ENCODE measurements at regions of chr7 and their contacts with region 1.

Region 1: GRCh38 chr7:104137971-104138370 is 69.8 kb downstream of the ORC5 start:
- DNase-seq: no peak
- H3K4me3 Mint-ChIP-seq: no peak overlapping the region
- H3K27ac Mint-ChIP-seq: peak overlapping the region; percentile 61
- H3K4me1 Mint-ChIP-seq: peaks cover 14% of the 10 kb centered on the region
- H3K27me3 Mint-ChIP-seq: no peaks in the 10 kb centered on the region

Region 2: GRCh38 chr7:104207731-104208420 is 69.9 kb after region 1 on chr7 and contains the start of gene ORC5:
- intact Hi-C with region 1: loop called (anchors 5 kb)
- DNase-seq: peak; percentile 72
- H3K4me3 Mint-ChIP-seq: peak within 1 kb of the TSS; percentile 94
- H3K27ac Mint-ChIP-seq: peak within 1 kb of the TSS; percentile 90
- H3K4me1 Mint-ChIP-seq: peaks cover 25% of the 10 kb centered on the region
- H3K27me3 Mint-ChIP-seq: peaks cover 12% of the 10 kb centered on the region
- total RNA-seq, gene ORC5: 25.0 and 28.3 TPM in 2 replicates

Region 3: GRCh38 chr7:104956753-104957450 is 818.9 kb after region 1 on chr7:
- intact Hi-C with region 1: loop called (anchors 5 kb)
- DNase-seq: peak; percentile 48
- H3K4me3 Mint-ChIP-seq: peak overlapping the region; percentile 65
- H3K27ac Mint-ChIP-seq: peak overlapping the region; percentile 100
- H3K4me1 Mint-ChIP-seq: peaks cover 59% of the 10 kb centered on the region
- H3K27me3 Mint-ChIP-seq: no peaks in the 10 kb centered on the region

Measured in activated T-helper 2 cell treated with anti-CD3 and anti-CD28 coated beads, Interferon-gamma antibody, Interleukin-2, Interleukin-4, amounts not matched to agents 10 μg/mL and 5 μg/mL and 100 μg/mL, durations not matched to agents 14 hours and 24 hours and 36 hours (primary cell).